ENCODE measurements at regions of chr1 and their contacts with region 1.

Region 1: GRCh38 chr1:21891621-21892486 is 45.3 kb downstream of the HSPG2 start:
- DNase-seq: no peak
- H3K4me3 ChIP-seq: no peak overlapping the region
- H3K27ac ChIP-seq: no peak overlapping the region
- H3K4me1 ChIP-seq: peaks cover 1 to 6% of the 10 kb centered on the region in 2 donors
- H3K27me3 ChIP-seq: no peaks in the 10 kb centered on the region
- CTCF ChIP-seq: no peak
- POLR2A ChIP-seq: no peak

Region 2: DNA sequence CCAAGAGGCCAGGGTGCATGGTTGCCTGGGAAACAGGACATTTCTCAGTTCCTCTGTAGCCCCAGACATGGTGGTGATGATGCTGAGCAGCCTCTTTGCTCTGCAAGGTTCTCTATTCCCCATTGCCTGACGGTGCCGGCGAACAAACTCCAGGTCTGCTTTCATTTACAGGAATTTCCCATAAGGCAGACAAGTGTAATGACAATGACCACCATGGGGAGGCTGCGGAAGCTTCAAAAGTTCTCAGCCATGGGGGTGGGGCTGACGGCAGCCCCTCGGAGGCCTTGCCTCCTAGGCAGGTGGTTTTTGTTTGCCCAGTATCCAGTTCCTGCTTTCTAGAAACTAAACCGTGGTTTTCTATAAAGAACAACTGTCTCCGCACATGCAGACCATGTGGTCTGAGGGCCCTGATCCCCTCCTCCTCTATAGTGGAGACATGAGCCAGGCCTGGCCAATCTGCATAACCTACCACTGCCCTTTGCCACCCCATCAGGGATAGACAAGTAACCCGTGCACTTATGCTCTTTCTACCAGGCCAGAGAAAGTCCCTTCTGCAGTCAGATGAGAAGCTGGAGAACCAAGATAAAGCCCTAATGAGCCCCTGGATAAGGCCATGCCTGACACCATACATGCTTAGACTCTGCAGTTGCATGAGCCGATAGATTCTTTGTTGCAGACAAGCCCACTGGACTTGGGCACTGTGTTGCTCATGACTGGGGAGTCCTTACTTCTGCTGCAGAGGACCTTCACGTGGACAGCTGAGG is 25.7 kb before region 1 on chr1:
- intact Hi-C with region 1: loop called (anchors 2 kb)
- DNase-seq: no peak
- H3K4me3 ChIP-seq: no peak overlapping the region
- H3K27ac ChIP-seq: peak overlapping the region in 1 of 2 donors; percentile 19
- H3K4me1 ChIP-seq: peaks cover 0 to 8% of the 10 kb centered on the region in 2 donors
- H3K27me3 ChIP-seq: no peaks in the 10 kb centered on the region
- CTCF ChIP-seq: no peak
- POLR2A ChIP-seq: no peak